T-cell (primary cell): ENCODE measurements at regions of chr7 and their contacts with region 1.

Region 1: DNA sequence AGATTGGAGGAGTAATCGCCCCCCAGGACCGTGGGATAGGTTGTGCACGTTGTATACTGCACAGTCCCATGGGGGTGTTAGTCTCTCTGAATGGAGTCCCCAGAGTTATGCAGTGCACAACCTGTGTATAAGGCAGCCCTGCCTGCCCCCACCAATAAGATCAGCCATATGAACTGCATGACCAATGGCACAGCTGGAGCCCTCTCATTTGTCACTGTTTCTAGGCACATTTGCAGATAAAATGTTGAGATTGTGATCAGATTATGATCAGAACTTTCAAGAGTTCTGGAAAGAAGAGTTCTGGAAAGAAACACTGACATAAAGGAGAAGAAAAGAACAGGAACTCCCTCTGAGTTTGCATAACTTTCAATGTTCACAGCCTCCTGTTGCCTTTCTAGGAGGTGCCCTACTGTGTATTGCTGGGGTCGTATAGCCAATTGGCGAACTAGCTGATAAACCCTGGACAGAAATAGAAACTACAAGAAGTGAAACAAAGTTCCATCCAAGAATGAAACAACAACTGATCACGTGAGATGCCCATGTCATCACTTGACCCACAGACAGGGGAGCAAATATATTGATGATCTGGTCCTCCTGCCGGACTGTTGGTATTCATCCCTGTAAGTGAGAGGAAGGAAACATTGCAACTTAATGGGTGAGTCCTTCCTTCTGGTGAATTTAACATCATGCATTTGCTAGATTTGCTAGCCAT is 49.6 kb upstream of the TOMM7 start:
- DNase-seq: no peak
- ATAC-seq: peak in 1 of 4 experiments; percentile 66
- H3K4me3 ChIP-seq: no peak overlapping the region
- H3K4me3 Mint-ChIP-seq: no peak overlapping the region
- H3K27ac ChIP-seq: no peak overlapping the region
- H3K27ac Mint-ChIP-seq: no peak overlapping the region
- H3K4me1 ChIP-seq: no peaks in the 10 kb centered on the region
- H3K4me1 Mint-ChIP-seq: peaks cover 0 to 5% (median 0%) of the 10 kb centered on the region in 3 donors
- H3K27me3 ChIP-seq: peaks cover 0 to 4% of the 10 kb centered on the region in 2 experiments
- H3K27me3 Mint-ChIP-seq: no peaks in the 10 kb centered on the region

Region 2: GRCh38 chr7:21819048-21819447 is 1053.2 kb before region 1 on chr7:
- CTCF ChIA-PET with region 1: no interaction called
- POLR2A ChIA-PET with region 1: interaction called in 1 of 2 experiments, 16 read pairs
- DNase-seq: no peak
- ATAC-seq: no peak
- H3K4me3 ChIP-seq: no peak overlapping the region
- H3K4me3 Mint-ChIP-seq: no peak overlapping the region
- H3K27ac ChIP-seq: no peak overlapping the region
- H3K27ac Mint-ChIP-seq: no peak overlapping the region
- H3K4me1 ChIP-seq: peaks cover 0 to 6% of the 10 kb centered on the region in 2 experiments
- H3K4me1 Mint-ChIP-seq: peaks cover 3 to 7% (median 7%) of the 10 kb centered on the region in 3 donors
- H3K27me3 ChIP-seq: no peaks in the 10 kb centered on the region
- H3K27me3 Mint-ChIP-seq: peaks cover 0 to 3% of the 10 kb centered on the region in 2 donors

Region 3: DNA sequence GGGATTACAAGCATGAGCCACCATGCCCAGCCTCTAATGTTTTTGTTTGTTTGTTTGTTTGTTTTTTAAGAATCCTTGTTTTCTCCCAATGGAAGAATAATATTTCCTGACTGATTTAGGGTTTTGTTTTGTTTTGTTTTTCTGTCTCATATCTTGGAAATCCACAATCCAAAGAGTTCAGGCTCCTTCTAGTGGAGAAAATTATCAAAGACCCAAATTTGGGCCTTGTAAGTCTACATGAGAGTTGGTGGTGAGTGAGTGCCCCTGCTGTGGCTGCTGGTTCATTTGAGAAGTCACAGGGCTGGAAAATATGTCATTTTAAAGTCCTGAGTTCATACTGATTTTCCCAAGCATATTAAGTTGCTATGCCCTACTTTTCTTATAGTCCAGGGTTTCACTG is 199.8 kb after region 1 on chr7:
- CTCF ChIA-PET with region 1: no interaction called
- POLR2A ChIA-PET with region 1: no interaction called
- DNase-seq: no peak
- ATAC-seq: no peak
- H3K4me3 ChIP-seq: no peak overlapping the region
- H3K4me3 Mint-ChIP-seq: no peak overlapping the region
- H3K27ac ChIP-seq: no peak overlapping the region
- H3K27ac Mint-ChIP-seq: no peak overlapping the region
- H3K4me1 ChIP-seq: no peaks in the 10 kb centered on the region
- H3K4me1 Mint-ChIP-seq: no peaks in the 10 kb centered on the region
- H3K27me3 ChIP-seq: no peaks in the 10 kb centered on the region
- H3K27me3 Mint-ChIP-seq: peaks cover 8 to 14% of the 10 kb centered on the region in 2 donors